B cell (primary cell): ENCODE measurements at regions of chr10 and their contacts with region 1.

Region 1: GRCh38 chr10:100969187-100970075 is at the start of gene SEMA4G:
- DNase-seq: peak; percentile 74
- ATAC-seq: peak; percentile 84
- H3K4me3 ChIP-seq: peak within 1 kb of the TSS in 4 of 5 experiments; percentile 43 to 67 (median 56)
- H3K4me3 Mint-ChIP-seq: peak within 1 kb of the TSS; percentile 63
- H3K27ac ChIP-seq: no peak within 1 kb of the TSS
- H3K27ac Mint-ChIP-seq: no peak within 1 kb of the TSS
- H3K4me1 ChIP-seq: peaks cover 13 to 17% of the 10 kb centered on the region in 2 donors
- H3K4me1 Mint-ChIP-seq: peaks cover 16% of the 10 kb centered on the region
- H3K27me3 ChIP-seq: no peaks in the 10 kb centered on the region
- H3K27me3 Mint-ChIP-seq: no peaks in the 10 kb centered on the region
- CTCF ChIP-seq: peak; percentile 78
- total RNA-seq, gene SEMA4G: 0.96 and 2.2 TPM in 2 replicates

Region 2: DNA sequence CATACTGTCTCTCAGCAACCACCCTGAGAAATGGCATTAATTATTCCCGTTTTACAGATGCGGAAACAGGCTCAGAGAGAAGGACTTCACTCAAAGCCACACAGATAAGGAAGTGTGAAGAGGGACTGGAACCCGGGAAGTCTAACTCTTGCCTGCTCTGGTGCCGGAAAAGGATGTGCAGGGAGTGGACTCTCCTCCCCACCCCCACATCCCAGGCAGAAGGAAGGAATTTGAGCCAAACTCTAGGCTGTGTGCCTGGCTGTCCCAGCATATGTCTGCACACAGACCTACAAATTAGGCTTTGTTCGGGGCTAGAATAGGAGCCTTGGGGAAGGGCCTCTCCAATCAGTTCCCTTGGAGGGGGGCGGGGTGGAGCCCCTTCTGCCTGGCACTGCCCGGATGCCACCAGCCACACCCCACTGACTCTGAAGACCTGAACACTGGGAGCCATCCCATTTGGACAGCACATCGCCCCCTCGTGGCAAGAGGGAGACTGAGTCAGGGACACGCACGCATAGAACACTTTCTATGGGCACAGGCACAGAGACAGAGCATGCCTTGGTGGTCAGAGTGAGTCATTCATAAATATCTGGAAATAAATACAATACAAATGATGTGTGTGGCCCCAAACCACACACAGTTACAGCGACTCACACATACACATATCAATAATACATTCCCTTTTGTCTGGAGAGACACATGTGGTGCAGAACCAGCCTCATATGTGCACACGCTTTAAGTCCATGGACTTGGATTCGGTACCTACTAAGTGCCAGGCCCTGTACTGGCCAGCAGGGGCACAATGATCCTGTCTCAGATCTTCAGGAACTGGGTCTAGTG is 43.3 kb after region 1 on chr10:
- CTCF ChIA-PET with region 1: interaction called, 25 read pairs
- POLR2A ChIA-PET with region 1: interaction called, 3 read pairs
- intact Hi-C with region 1: no loop called
- DNase-seq: peak; percentile 77
- ATAC-seq: peak; percentile 86
- H3K4me3 ChIP-seq: no peak overlapping the region
- H3K4me3 Mint-ChIP-seq: no peak overlapping the region
- H3K27ac ChIP-seq: no peak overlapping the region
- H3K27ac Mint-ChIP-seq: no peak overlapping the region
- H3K4me1 ChIP-seq: peaks cover 8 to 14% of the 10 kb centered on the region in 2 donors
- H3K4me1 Mint-ChIP-seq: peaks cover 16% of the 10 kb centered on the region
- H3K27me3 ChIP-seq: peaks cover 0 to 32% (median 18%) of the 10 kb centered on the region in 4 experiments
- H3K27me3 Mint-ChIP-seq: peaks cover 27% of the 10 kb centered on the region
- CTCF ChIP-seq: peak; percentile 83

Region 3: GRCh38 chr10:101018600-101019439 is 49.4 kb after region 1 on chr10:
- CTCF ChIA-PET with region 1: interaction called, 25 read pairs
- POLR2A ChIA-PET with region 1: no interaction called
- intact Hi-C with region 1: no loop called
- DNase-seq: peak; percentile 67
- ATAC-seq: peak; percentile 46
- H3K4me3 ChIP-seq: peak overlapping the region in 1 of 5 experiments; percentile 23
- H3K4me3 Mint-ChIP-seq: peak overlapping the region; percentile 38
- H3K27ac ChIP-seq: no peak overlapping the region
- H3K27ac Mint-ChIP-seq: no peak overlapping the region
- H3K4me1 ChIP-seq: peaks cover 16 to 22% of the 10 kb centered on the region in 2 donors
- H3K4me1 Mint-ChIP-seq: peaks cover 16% of the 10 kb centered on the region
- H3K27me3 ChIP-seq: peaks cover 0 to 46% (median 24%) of the 10 kb centered on the region in 4 experiments
- H3K27me3 Mint-ChIP-seq: peaks cover 38% of the 10 kb centered on the region
- CTCF ChIP-seq: peak; percentile 69